ENCODE measurements at regions of chr2 and their contacts with region 1.

Region 1: GRCh38 chr2:23760736-23761135 is 166.2 kb downstream of the ATAD2B start:
- DNase-seq: peak; percentile 80
- ATAC-seq: peak; percentile 51
- H3K4me3 ChIP-seq: no peak overlapping the region
- H3K27ac ChIP-seq: no peak overlapping the region
- H3K4me1 ChIP-seq: peaks cover 13% of the 10 kb centered on the region
- H3K27me3 ChIP-seq: no peaks in the 10 kb centered on the region
- CTCF ChIP-seq: peak; percentile 59
- POLR2A ChIP-seq: no peak
- RAD21 ChIP-seq: peak; percentile 56

Region 2: DNA sequence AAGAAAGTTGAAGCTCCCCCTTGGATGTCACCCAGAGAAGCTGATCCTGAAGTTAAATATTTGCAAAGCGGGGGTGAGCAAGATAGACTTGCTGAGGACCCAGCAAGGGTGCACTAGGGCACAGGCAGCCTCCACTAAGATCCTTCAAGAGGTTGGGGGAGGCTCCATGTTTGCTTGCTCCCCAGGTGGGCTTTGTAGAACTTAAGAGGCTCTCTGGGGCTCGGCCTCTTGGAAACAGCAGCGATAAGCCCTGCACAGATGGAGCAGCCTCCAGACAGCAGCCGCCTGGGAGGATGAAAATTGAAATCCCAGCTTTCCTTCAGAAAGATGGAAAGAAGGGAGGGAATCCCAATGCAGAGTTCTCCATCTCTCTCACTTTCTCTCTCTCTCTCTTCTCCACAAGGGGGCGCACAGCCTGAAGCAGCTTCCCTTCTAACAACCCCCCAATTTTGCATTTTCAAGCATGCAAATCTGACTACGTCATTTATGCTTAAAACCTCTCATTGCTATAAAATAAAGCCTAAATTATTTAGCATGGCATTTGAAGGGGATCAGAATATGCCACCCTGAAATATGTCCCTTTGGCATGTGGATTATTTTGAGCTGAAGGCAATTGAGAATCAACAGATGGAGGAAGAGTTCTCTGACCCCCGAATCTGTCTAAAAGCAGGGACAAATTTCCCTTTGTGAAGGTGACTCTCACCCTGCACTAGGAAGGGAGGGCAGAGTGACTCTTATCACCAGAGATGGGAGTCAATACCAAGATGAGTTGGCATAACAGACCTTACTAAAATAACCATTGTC is 561.4 kb before region 1 on chr2:
- CTCF ChIA-PET with region 1: no interaction called
- POLR2A ChIA-PET with region 1: no interaction called
- dilution Hi-C with region 1: no loop called
- in situ Hi-C with region 1: loop called (anchors 5 kb)
- intact Hi-C with region 1: loop called (anchors 2 kb)
- DNase-seq: peak; percentile 38
- ATAC-seq: peak; percentile 48; the same call in 1 of the 2 replicates
- H3K4me3 ChIP-seq: no peak overlapping the region
- H3K27ac ChIP-seq: no peak overlapping the region
- H3K4me1 ChIP-seq: no peaks in the 10 kb centered on the region
- H3K27me3 ChIP-seq: no peaks in the 10 kb centered on the region
- CTCF ChIP-seq: peak; percentile 61
- POLR2A ChIP-seq: no peak
- RAD21 ChIP-seq: peak; percentile 64

Region 3: DNA sequence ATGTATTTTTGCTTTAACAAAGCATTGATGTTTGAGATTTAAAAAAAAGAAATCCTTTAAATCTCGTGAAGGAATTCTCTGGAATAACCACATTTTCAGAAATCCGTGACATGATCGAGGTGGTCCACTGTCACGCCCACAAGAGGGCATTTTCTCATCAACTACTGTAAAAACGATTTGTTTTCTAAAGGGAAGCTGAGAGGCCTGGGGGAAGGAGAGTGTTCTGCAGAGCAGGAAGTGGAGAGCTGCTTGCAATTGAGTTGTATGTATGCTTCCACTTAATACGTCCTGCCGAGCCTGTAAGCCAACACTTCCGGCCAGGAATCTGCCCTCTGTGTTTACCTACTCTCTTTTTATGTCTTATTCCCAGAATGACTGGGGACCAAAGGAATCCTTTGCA is 356.3 kb before region 1 on chr2:
- CTCF ChIA-PET with region 1: no interaction called
- POLR2A ChIA-PET with region 1: no interaction called
- dilution Hi-C with region 1: no loop called
- in situ Hi-C with region 1: loop called (anchors 25 kb)
- intact Hi-C with region 1: loop called (anchors 5 kb)
- DNase-seq: peak; percentile 91
- ATAC-seq: peak; percentile 88
- H3K4me3 ChIP-seq: no peak overlapping the region
- H3K27ac ChIP-seq: peak overlapping the region; percentile 70; the same call in 1 of the 2 replicates
- H3K4me1 ChIP-seq: peaks cover 6% of the 10 kb centered on the region
- H3K27me3 ChIP-seq: no peaks in the 10 kb centered on the region
- CTCF ChIP-seq: peak; percentile 42
- POLR2A ChIP-seq: no peak
- RAD21 ChIP-seq: peak; percentile 40; the same call in 1 of the 2 replicates

Region 4: DNA sequence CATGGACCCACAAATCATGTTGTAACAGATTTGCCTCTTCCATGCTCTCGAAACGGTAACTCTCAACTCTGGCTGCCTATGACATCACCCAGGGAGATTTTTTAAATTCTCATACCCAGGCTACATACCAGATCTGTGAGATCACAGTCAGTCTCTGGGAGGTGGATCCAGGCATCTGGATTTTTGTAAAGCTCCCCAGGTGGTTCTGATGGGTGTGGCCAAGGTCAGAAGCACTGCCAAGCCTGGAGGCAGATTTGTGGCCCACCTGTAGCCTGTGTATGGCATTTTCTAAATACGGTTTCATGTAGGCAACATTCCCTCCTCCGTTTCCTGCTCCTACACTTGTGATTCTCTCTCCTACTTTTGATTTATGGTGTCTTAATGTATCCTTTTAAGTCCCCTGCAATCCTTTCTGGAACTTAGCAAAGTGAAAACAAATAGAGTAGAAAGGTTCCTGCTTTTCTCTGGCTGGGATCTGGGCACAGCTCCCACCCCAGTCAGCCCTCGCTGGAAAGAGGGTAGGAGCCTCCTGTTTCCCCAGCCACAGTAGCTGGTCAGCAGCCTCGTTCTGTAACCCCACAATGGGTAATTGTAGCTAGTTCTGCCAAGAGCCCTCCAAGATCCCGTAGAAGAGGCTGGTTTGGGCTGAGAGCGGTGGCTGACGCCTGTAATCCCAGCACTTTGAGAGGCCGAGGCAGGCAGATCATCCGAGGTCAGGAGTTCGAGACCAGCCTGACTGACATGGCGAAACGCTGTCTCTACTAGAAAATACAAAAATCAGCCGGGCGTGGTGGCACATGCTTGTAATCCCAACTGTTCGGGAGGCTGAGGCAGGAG is 279.5 kb before region 1 on chr2:
- CTCF ChIA-PET with region 1: no interaction called
- POLR2A ChIA-PET with region 1: no interaction called
- dilution Hi-C with region 1: no loop called
- in situ Hi-C with region 1: no loop called
- intact Hi-C with region 1: loop called (anchors 10 kb)
- DNase-seq: peak; percentile 90
- ATAC-seq: peak; percentile 87
- H3K4me3 ChIP-seq: no peak overlapping the region
- H3K27ac ChIP-seq: peak overlapping the region; percentile 67; the same call in 1 of the 2 replicates
- H3K4me1 ChIP-seq: peaks cover 15% of the 10 kb centered on the region
- H3K27me3 ChIP-seq: no peaks in the 10 kb centered on the region
- CTCF ChIP-seq: no peak
- POLR2A ChIP-seq: no peak
- RAD21 ChIP-seq: no peak

Region 5: DNA sequence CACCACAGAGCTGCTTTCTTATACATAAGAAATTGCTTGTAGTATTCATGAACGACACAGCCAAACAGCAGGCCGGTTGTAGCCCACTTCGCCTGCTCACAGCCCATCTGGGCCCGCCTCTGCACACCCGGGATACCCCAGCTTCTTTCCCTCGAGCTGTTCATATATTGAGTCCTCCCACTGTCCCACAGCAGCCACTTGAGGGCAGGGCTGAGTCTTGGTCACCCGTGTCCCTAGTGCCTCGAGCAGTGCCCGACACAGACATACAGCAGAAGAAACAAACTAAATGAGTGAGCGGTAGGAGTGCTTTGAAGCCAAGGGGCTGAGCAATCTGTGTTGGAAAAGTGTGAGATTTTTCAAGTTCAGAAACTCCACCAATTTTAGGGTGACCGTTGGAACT is 124.3 kb before region 1 on chr2:
- CTCF ChIA-PET with region 1: no interaction called
- POLR2A ChIA-PET with region 1: no interaction called
- dilution Hi-C with region 1: no loop called
- in situ Hi-C with region 1: no loop called
- intact Hi-C with region 1: loop called (anchors 2 kb)
- DNase-seq: peak; percentile 27
- ATAC-seq: peak; percentile 66
- H3K4me3 ChIP-seq: no peak overlapping the region
- H3K27ac ChIP-seq: no peak overlapping the region
- H3K4me1 ChIP-seq: peaks cover 10% of the 10 kb centered on the region
- H3K27me3 ChIP-seq: no peaks in the 10 kb centered on the region
- CTCF ChIP-seq: peak; percentile 33
- POLR2A ChIP-seq: no peak
- RAD21 ChIP-seq: peak; percentile 26; the same call in 1 of the 2 replicates

Measured in IMR-90 (cell line).